ENCODE measurements at regions of chr19 and their contacts with region 1.

Region 1: DNA sequence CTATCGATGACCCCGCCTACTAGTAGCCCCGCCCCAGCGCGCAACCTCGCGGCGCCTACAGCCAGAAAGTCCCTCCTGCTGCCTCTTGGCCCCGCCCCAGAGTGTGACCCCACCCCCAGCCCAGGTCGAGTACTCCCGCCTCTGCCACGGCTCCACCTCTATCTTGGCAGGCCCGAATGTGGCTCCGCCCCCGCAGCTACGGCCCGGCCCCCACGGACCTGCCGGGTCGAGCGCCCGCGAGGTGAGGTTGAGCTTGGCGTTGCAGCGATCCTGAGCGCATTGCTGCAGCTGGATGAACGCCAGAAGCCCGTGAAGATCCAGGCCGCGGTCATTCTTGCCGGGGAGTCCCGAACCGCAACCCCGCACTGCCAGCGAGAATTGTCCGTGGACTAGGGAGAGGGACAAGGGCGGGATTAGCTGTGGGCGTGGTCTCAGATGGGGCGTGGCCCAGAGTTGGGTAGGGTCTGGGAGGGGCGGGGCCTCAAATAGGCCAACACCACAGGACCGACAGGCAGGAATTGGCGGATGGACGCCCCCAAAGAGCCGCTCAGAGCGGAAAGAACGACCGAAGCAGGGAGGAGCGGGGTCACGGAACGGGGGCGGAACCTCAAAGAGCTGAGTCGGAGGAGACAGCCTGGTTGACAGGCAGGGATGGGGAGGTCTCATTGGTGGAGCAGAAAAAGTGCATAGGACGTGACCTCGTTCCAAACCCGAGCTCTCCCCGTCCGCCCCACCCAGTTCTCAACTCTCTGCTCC is 1.8 kb downstream of the LYPD3 start:
- DNase-seq: peak; percentile 96
- H3K4me3 Mint-ChIP-seq: peak overlapping the region; percentile 92
- H3K27ac Mint-ChIP-seq: peak overlapping the region; percentile 90
- H3K4me1 Mint-ChIP-seq: peaks cover 45% of the 10 kb centered on the region
- H3K27me3 Mint-ChIP-seq: no peaks in the 10 kb centered on the region

Region 2: DNA sequence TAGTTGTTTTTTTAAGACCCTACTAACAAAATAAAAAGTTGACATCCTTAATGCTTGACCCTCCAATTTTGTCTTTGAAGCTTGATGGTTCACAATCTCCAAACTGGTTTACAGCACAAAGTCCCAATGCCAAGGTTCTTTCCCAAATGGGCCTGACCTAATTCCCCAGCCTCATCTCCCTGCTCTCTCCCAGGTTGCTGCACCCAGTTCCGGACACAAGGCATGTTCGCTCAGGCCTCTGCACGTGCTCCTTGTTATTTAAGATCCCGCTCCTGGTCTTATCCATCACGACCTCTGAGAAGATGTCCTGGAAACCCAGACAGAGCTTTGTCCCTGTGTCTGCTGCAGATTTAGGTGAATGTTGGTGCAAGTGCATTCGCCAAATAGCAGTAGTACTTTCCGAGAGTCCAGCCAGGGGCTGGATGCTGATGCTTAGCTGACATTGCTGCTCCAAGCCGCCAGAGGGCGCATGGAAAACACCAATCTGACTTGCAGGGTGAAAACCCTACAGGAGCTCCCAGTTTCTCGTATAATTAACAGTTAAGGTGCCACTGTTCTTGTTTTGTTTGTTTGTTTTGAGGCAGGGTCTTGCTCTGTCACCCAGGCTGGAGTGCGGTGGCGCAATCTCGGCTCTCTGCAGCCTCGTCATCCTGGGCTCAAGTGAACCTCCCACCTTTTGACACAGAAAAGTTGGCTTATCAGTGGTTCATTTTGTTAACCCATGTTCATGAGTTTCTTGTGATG is 16.6 kb before region 1 on chr19:
- intact Hi-C with region 1: loop called (anchors 1 kb)
- DNase-seq: peak; percentile 68
- H3K4me3 Mint-ChIP-seq: no peak overlapping the region
- H3K27ac Mint-ChIP-seq: no peak overlapping the region
- H3K4me1 Mint-ChIP-seq: peaks cover 29% of the 10 kb centered on the region
- H3K27me3 Mint-ChIP-seq: no peaks in the 10 kb centered on the region

Region 3: DNA sequence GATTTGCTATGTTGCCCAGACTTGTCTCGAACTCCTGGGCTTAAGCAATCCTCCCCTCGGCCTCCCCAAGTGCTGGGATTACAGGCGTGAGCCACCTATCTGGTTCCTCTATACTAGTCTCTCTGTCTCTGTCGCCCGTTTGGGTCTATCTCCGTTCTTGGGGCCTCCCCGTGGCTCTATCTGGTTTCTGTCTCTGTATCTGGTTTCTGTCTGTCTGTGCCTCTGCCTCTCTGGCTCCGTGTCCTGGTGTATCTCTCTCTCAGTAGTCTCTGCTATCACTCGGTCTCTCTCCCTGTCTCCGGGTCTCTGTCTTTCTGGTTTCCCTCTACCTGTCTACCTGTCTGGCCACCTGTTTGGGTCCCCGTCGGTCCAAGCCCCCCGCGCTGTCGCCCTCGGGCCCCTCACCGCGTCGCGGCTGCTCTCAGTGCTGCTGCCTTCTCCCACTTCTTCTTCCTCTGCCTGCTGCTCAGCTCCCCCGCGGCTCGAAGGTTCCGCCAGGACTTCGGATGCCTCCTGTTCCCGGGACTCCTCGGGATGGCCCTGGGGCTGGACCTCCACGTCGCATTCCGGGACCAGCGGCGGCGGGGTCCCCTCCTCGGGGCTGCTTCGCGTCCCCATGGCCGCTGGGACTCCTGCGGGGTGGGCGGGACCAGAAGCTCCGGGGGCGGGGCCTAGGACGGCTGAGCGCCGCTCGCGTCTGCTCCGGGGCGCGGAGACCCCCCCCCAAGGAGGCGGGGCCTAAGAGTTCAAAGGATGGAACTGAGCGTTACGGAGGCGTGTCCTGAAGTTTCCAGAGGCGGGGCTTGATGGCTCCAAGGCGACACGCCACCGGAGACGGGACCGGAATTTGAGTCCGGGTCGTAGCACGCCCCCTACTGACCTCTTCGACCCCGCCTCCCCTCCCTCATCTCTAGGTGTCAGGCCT is 40.2 kb after region 1 on chr19:
- intact Hi-C with region 1: loop called (anchors 1 kb)
- DNase-seq: peak; percentile 98
- H3K4me3 Mint-ChIP-seq: peak overlapping the region; percentile 88
- H3K27ac Mint-ChIP-seq: peak overlapping the region; percentile 82
- H3K4me1 Mint-ChIP-seq: peaks cover 18% of the 10 kb centered on the region
- H3K27me3 Mint-ChIP-seq: no peaks in the 10 kb centered on the region

Region 4: DNA sequence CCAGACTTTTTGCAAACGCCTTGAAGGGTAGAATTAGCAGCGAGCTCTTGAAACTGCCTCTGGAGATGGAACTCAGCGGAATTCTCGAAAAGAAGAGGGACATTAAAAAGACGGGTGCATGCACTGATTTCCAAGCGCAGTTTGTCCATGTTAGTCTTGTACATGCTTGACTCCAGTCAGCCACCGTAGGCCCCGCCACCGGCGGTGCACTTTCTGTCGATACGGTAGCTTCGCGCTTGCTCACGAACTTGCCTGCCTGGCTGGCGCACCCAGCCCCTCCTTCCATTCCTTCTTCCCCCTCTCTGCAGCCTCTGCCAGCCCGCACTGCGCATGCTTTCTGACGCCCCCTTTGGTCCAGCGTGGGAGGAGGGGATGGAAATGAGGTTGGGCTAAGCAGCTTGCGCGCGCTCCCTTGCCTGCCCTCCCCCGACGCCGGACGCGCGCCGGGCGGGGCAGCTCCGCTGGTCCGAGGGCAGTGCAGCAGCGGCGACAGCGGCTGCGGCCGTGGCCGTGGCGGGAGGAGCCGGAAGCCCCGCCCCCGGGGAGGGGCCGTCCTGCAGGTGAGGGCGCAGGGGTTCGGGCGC is 69.5 kb after region 1 on chr19 and contains the start of gene ZNF575:
- intact Hi-C with region 1: loop called (anchors 1 kb)
- DNase-seq: peak; percentile 81
- H3K4me3 Mint-ChIP-seq: peak within 1 kb of the TSS; percentile 96
- H3K27ac Mint-ChIP-seq: peak within 1 kb of the TSS; percentile 99
- H3K4me1 Mint-ChIP-seq: peaks cover 23% of the 10 kb centered on the region
- H3K27me3 Mint-ChIP-seq: no peaks in the 10 kb centered on the region
- total RNA-seq, gene ZNF575: 1.4 and 2.6 TPM in 2 replicates

Region 5: DNA sequence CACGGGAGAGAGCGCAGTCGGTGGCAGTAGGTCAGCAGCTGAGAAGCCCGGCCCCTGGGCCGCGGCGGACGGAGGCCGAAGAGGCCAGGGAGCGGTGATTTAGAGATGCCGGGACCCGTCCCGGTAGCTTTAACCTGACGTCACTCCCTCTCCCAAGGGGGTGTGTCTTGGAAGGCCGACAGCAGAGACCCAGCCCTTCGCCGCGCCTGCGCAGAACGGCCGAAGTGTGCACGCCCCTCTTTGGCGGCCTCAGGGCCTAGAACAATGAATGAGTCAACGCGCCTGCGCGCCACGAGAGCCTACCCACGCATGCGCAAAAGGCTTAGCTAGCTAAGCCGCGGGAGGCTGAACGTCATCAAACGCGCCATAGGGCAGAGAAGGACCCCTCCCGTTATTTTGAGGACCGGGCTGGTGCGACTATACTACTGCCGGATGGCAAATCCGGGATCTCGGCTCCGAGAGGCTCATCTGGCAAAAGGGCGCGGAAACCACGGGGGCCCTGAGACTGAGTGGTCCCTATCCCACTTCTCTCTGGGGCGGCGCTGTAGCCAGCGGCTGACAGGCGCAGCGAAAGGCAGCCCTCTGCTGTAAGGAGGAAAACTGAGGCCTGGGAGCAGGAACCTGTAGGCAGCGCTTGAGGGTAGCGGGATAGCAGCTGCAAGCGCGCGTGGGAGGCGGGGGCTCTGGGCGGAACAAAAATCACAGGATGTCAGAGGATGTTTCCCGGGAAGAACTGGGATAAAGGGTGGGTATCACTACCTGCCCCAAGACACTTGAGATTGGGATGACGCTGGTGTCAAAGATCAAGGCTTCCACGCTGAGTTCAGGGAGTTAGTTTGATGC is 132.7 kb after region 1 on chr19 and contains the starts of genes IRGQ and ZNF576:
- intact Hi-C with region 1: loop called (anchors 1 kb)
- DNase-seq: peak; percentile 100
- H3K4me3 Mint-ChIP-seq: peak within 1 kb of the TSS; percentile 97
- H3K27ac Mint-ChIP-seq: peak within 1 kb of the TSS; percentile 97
- H3K4me1 Mint-ChIP-seq: peaks cover 39% of the 10 kb centered on the region
- H3K27me3 Mint-ChIP-seq: no peaks in the 10 kb centered on the region
- total RNA-seq, gene IRGQ: 33.5 and 34.9 TPM in 2 replicates
- total RNA-seq, gene ZNF576: 17.3 and 18.6 TPM in 2 replicates

Region 6: GRCh38 chr19:43639519-43640423 is 176.2 kb after region 1 on chr19 and contains the start of gene CADM4:
- intact Hi-C with region 1: loop called (anchors 1 kb)
- DNase-seq: peak; percentile 30
- H3K4me3 Mint-ChIP-seq: peak within 1 kb of the TSS; percentile 80
- H3K27ac Mint-ChIP-seq: peak within 1 kb of the TSS; percentile 46
- H3K4me1 Mint-ChIP-seq: no peaks in the 10 kb centered on the region
- H3K27me3 Mint-ChIP-seq: peaks cover 41% of the 10 kb centered on the region
- total RNA-seq, gene CADM4: 0.32 and 0.39 TPM in 2 replicates

Measured in activated T-helper 1 cell treated with anti-CD3 and anti-CD28 coated beads, Interleukin-12 subunit alpha, Interleukin-12 subunit beta, Interleukin-2, Interleukin-4 antibody, amounts not matched to agents 30 ng/mL and 10 ng/mL and 1 ng/mL, durations not matched to agents 14 hours and 24 hours and 36 hours (primary cell).